Activated CD4-positive, alpha-beta T cell treated with anti-CD3 and anti-CD28 coated beads, Interleukin-2, amount 10 ng/mL, durations not matched to agents 24 days and 14 days (primary cell): ENCODE measurements at regions of chrX and their contacts with region 1.

Region 1: GRCh38 chrX:15158736-15159406 is 111.0 kb downstream of the ASB9 start:
- DNase-seq: peak; percentile 80
- H3K4me3 Mint-ChIP-seq: peak overlapping the region; percentile 85
- H3K27ac Mint-ChIP-seq: peak overlapping the region; percentile 91
- H3K4me1 Mint-ChIP-seq: peaks cover 25% of the 10 kb centered on the region
- H3K27me3 Mint-ChIP-seq: no peaks in the 10 kb centered on the region

Region 2: GRCh38 chrX:14899607-14900006 is 259.3 kb before region 1 on chrX:
- intact Hi-C with region 1: no loop called
- DNase-seq: no peak
- H3K4me3 Mint-ChIP-seq: no peak overlapping the region
- H3K27ac Mint-ChIP-seq: peak overlapping the region; percentile 75
- H3K4me1 Mint-ChIP-seq: peaks cover 3% of the 10 kb centered on the region
- H3K27me3 Mint-ChIP-seq: no peaks in the 10 kb centered on the region

Region 3: DNA sequence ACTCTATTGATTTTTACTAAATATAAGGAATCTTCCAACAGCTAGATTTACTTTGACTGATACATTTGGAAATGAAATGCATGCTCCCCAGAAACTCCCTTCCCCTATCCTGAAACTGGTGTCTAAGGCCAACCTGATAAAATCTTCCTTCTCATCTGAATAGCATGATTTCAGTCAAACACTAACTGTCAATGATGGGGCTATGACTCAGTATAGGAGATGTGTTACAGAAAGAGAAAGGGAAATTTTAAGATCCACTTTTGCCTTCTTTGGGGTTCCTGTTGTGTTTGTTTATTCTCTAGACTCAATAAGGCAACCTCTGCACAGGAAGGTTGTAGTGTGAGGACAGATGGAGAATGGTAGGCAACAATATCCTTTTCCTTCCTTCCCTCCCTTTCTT is 125.0 kb before region 1 on chrX:
- intact Hi-C with region 1: loop called (anchors 5 kb)
- DNase-seq: no peak
- H3K4me3 Mint-ChIP-seq: no peak overlapping the region
- H3K27ac Mint-ChIP-seq: no peak overlapping the region
- H3K4me1 Mint-ChIP-seq: peaks cover 6% of the 10 kb centered on the region
- H3K27me3 Mint-ChIP-seq: no peaks in the 10 kb centered on the region